Activated CD4-positive, alpha-beta T cell treated with anti-CD3 and anti-CD28 coated beads for 36 hours (primary cell): ENCODE measurements at regions of chr2 and their contacts with region 1.

Region 1: DNA sequence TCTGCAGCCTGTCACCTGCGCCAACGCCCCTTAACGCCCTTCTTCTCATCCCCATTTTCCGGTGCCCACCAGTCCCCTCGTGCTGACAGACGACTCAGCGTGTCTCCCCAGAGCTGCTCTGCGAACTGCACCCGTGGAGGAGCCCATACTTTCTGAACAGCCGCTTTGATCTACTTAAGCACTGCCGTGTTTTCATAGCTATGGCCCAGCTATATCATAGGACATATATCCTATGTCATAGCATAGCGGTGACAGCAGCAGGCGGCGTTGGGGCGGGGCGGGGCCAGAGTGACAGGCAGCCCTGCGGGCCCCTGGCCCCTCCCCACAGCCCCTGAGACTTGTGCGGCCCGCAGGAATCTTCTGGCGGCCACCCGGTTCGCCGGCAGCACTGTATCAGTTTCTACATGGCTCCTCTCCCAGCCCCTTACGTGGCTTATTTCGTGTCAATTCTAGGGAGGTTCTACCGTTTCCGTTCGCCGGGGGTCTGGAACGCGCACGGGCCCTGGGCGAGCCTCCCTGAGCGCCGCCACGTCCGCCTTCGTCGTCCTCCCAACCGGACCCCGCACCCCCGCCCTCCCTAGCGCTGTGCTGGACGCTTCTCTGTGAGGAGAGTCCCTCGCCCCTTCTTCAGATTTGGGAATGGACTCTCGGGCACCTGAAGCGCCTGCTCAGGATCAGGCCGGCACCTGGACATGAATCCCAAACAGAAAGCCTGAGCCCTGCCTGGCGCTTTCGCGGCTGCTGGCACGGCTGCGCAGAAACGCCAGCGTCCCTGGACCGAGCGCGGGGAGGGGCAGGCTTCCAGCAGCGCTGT is 35.4 kb downstream of the PTPN18 start:
- DNase-seq: peak; percentile 91
- ATAC-seq: peak; percentile 99
- H3K4me3 Mint-ChIP-seq: peak overlapping the region; percentile 72
- H3K27ac Mint-ChIP-seq: peak overlapping the region; percentile 87
- H3K4me1 Mint-ChIP-seq: peaks cover 10% of the 10 kb centered on the region
- H3K27me3 Mint-ChIP-seq: peaks cover 6% of the 10 kb centered on the region

Region 2: DNA sequence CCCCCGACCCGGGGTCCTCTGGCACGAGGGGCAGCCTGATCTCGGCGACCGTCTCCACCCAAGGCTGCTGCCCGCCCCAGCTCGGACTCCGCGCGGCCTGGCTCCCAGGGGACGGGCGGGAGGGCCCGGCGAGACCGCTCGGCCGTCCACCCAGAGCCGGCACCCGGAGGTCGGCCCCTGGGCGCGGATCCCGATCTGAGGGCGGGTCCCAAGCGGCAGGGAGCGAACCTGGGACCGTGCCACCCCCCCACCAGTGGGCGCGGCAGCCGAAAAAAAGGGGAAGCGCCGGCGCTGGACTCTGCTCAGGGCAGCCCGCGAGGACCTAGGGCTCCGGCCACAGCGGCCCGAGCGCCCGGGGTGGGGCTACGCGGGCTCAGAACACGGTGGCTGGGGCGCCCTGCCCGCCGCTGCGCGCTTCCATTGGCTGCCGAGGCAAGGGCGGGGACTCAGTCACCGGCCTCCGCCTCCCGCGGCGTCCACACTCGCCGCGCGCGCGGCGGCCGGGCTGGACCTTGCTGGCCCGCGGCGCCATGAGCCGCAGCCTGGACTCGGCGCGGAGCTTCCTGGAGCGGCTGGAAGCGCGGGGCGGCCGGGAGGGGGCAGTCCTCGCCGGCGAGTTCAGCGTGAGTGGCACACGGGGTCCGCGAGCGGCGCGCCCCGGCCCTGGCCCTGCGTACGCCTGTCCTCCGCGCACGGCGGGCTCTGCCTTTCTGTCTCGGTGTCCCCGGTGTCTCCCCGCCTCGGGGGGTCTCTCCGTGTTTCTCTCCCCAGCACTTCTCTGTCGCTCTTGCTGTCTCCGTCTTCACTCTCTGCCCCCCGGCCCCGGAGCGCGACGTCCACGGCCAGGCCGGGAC is 35.5 kb before region 1 on chr2 and contains the start of gene PTPN18:
- CTCF ChIA-PET with region 1: interaction called, 3 read pairs
- POLR2A ChIA-PET with region 1: no interaction called
- intact Hi-C with region 1: loop called in 1 of 2 experiments (anchors 1 kb)
- DNase-seq: peak; percentile 76
- ATAC-seq: peak; percentile 96
- H3K4me3 Mint-ChIP-seq: peak within 1 kb of the TSS; percentile 67
- H3K27ac Mint-ChIP-seq: peak within 1 kb of the TSS; percentile 43
- H3K4me1 Mint-ChIP-seq: peaks cover 8% of the 10 kb centered on the region
- H3K27me3 Mint-ChIP-seq: no peaks in the 10 kb centered on the region
- total RNA-seq, gene PTPN18: 41.6 to 49.3 TPM

Region 3: DNA sequence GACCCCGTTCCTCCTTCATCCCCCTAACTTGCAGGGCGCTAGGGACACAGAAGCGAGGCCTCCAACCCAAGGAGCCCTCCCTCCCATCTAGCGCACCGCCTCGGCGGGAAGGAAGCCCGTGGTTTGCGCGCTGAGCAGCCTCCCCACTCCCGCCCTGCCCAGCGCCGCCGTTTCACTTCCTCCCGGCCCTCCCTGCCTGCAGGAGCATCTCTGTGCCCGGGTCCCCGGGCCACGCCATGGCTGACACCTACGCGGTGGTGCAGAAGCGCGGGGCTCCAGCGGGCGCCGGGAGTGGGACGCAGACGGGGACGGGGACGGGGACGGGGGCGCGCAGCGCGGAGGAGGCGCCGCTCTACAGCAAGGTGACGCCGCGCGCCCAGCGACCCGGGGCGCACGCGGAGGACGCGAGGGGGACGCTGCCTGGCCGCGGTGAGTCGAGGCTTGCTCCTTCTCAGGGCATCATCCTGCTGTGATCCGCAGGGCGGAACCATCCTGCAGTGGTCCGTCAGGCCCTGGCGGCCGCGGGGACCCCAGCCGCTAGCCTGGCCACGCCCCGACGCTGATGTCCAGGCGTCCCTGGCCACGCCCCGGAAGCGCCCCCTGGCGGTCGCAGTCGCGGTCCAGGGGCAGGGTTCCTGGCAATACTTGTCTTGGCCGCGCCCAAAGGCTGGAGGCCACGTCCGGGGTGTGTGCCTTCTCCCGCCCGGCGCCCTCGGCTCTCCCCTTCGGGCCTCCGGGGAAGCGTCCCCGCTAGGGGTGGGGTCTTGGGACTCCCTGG is 19.0 kb before region 1 on chr2:
- CTCF ChIA-PET with region 1: interaction called, 14 read pairs
- POLR2A ChIA-PET with region 1: interaction called, 3 read pairs
- intact Hi-C with region 1: loop called in 1 of 2 experiments (anchors 1 kb)
- DNase-seq: peak; percentile 85
- ATAC-seq: peak; percentile 68
- H3K4me3 Mint-ChIP-seq: peak overlapping the region; percentile 84
- H3K27ac Mint-ChIP-seq: peak overlapping the region; percentile 96
- H3K4me1 Mint-ChIP-seq: peaks cover 60% of the 10 kb centered on the region
- H3K27me3 Mint-ChIP-seq: no peaks in the 10 kb centered on the region

Region 4: DNA sequence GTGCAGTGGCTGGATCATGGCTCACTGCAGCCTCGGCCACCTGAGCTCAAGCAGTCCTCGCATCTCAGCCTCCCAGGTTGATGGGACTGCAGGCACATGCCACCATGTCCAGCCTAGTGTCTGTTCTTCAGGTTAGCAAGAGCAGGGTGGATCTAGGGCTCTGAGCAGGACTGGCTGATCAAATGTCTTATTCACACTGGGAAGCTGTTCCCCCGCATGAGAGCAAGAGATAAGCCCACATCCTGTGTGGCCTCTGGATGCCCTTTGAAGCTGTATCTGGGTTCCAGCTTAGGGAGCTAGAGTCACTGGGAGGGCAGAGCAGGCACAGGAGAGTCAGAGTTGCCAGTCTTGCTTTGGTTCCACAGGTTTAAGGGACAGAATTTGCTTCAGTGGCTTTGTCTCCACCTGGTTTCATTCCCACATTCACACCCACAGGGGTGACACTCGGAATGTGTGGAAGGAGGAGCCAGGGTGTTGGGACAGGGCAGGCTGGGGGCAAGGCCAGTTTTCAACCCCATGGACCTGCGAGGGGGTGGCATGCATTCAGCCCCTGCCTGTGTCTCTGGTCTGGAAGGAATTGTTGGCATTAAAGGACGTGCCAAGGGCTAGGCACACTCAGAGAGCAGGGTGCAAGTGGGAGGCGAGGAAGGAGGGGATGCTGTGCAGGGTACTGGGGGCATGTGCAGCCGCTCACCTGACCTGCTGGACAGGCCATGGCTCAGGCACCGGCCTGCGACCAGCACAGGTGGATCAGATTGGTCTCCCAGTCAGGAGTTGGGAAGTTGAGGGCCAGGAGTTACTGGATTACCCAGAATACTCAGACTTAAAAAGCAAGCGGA is 10.9 kb before region 1 on chr2:
- CTCF ChIA-PET with region 1: interaction called, 15 read pairs
- POLR2A ChIA-PET with region 1: interaction called, 3 read pairs
- intact Hi-C with region 1: no loop called
- DNase-seq: peak; percentile 61
- ATAC-seq: peak; percentile 87
- H3K4me3 Mint-ChIP-seq: no peak overlapping the region
- H3K27ac Mint-ChIP-seq: peak overlapping the region; percentile 70
- H3K4me1 Mint-ChIP-seq: peaks cover 48% of the 10 kb centered on the region
- H3K27me3 Mint-ChIP-seq: no peaks in the 10 kb centered on the region

Region 5: DNA sequence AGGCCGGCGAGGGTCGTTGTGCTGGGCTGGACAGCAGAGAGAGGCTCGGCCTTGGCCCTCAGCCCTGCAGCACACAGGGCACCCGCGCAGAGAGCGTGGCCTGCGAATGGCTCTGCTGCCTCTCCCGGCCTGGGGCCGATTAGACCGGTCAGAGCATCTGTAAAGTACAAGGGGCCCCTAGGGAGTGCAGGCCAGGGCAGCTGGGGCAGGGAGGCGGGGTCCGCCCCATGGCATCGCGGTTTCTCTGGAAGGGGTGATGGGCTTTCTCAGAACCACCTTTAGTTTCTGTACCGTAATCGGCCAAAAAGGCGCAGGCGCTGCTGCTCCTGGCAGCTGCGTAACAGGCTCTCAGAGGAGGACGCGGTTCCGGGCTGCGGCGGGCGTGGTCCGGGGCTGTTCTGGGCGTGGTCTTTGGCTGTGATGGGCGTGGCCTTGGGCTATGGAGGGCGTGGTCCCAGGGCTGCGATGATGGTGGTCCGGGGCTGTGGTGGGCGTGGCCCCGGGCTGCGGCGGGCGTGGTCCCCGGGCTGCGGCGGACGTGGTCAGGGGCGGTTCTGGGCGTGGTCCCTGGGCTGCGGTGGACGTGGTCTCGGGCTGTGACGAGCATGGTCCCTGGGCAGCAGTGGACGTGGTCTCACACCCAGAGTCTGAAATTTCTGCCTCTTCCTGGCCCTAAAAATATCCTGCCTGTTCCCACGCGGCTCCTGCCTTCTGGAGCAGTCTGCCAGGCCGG is 336.2 kb after region 1 on chr2:
- CTCF ChIA-PET with region 1: interaction called, 3 read pairs
- POLR2A ChIA-PET with region 1: no interaction called
- intact Hi-C with region 1: loop called in 1 of 2 experiments (anchors 10 kb)
- DNase-seq: peak; percentile 93
- ATAC-seq: peak; percentile 97
- H3K4me3 Mint-ChIP-seq: peak overlapping the region; percentile 67
- H3K27ac Mint-ChIP-seq: peak overlapping the region; percentile 55
- H3K4me1 Mint-ChIP-seq: peaks cover 3% of the 10 kb centered on the region
- H3K27me3 Mint-ChIP-seq: peaks cover 8% of the 10 kb centered on the region